Right ventricle myocardium inferior (tissue), 1 donor: ENCODE measurements at regions of chr10 and their contacts with region 1.

Region 1: GRCh38 chr10:130190055-130190736 is 54.0 kb downstream of the GLRX3 start:
- DNase-seq: peak; percentile 94
- ATAC-seq: peak; percentile 94

Region 2: DNA sequence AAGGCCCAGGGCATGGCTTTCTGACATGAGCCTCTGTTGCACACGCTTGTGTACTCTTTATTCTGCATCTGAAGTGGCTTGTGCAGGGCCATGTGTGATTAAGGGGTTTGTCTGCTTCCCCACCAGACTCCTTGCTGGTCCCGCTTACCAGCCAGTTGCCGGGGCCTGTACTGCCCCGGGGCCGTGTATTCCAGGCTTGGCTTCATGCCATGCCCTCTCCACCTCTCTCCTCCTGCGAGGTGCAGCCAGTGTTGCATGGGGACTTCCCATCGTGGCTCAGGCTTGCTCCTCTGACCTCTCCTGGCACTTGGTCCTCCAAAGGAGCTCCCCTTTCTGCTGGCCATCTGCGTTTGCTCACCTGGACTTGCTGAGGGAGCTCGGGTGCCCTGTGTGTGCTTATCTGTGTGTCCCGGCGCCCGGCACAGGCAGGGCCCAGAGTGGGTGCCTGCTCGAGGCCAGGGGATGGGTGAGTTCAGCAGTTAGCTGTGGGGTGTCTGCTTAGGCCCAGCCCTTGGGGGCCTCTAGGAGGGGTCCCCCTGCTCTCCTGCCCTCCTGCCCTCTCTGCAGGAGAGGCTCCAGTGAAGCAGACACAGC is 68.6 kb before region 1 on chr10:
- intact Hi-C with region 1: no loop called
- DNase-seq: no peak
- ATAC-seq: no peak

Region 3: DNA sequence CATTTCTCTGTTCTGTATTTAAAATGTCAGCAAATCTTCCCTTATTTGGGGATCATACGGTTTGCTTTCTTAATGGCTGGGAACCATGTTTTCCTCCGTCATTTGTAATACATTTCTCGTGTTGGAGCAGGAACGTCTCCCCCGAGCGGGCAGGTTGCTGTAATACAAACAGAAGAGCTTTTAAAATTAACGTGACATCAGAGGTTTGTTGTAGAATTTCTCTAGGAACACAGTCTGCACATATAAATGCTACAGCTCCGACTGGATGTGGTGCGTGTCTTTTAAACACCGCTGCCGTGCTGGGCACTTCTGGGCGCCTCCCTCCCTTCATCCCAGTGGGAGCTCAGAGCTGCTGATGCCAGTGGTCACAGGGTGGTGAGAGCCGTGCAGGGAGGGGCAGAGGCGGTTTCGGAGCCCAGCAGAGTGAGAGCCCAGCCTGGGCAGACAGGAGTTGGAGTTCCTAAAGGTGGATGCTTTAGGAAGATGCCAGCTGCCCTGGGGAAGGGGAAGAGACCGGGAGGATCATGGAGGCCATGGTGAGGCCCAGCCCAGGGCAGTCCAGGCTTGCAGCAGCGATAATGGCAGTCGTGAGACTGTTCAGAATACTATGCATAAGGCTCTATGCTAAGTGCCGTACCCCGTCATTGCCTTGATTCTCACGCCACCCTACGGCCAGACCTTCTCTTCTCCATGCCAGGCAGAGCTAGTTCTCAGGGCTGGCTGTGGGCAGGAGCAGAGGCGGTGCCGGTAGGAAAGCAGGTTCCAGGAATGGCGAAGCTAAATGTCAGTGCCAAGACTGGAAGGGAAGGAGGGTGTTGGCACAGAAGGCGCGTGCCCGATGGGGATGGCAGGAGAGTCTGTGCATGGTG is 42.2 kb after region 1 on chr10:
- intact Hi-C with region 1: no loop called
- DNase-seq: no peak
- ATAC-seq: no peak

Region 4: DNA sequence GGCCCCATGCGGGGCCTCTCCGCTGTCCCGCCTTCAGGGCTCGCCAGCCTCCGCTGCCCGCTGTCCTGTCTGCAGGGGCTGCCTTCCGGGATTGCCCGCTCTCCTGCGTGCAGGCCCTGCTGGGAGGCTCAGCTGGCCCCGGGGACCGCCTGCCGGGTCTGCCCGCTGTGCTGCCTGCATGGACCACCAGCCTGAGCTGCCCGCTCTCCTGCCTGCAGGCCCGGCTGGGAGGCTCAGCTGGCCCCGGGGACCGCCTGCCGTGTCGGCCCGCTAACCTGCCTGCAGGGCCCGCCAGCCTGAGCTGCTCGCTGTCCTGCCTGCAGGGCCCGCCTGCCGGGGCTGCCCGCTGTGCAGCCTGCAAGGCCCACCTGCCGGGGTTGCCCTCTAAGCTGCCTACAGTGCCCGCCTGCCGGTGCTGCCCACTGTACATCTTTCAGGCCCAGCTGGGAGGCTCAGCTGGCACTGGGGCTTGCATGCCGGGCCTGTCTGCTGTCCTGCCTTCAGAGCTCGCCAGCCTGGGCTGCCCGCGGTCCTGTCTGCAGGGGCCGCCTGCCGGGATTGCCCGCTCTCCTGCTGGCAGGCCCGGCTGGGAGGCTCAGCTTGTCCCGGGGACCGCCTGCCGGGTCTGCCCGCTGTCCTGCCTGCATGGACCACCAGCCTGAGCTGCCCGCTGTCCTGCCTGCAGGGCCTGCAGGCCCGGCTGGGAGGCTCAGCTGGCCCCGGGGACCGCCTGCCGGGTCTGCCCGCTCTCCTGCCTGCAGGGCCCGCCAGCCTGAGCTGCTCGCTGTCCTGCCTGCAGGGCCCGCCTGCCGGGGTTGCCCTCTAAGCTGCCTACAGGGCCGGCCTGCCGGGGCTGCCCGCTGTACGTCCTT is 111.1 kb after region 1 on chr10:
- intact Hi-C with region 1: loop called (anchors 5 kb)
- DNase-seq: peak; percentile 87
- ATAC-seq: peak; percentile 88

Region 5: GRCh38 chr10:131786756-131787605 is 1596.8 kb after region 1 on chr10:
- intact Hi-C with region 1: loop called (anchors 5 kb)
- DNase-seq: no peak
- ATAC-seq: no peak